CD4-positive, alpha-beta memory T cell (primary cell): ENCODE measurements at regions of chr21 and their contacts with region 1.

Region 1: GRCh38 chr21:14864211-14865021 is 200.4 kb downstream of the NRIP1 start:
- DNase-seq: peak in 2 of 5 donors; percentile 3 to 4
- H3K4me3 ChIP-seq: no peak overlapping the region
- H3K4me3 Mint-ChIP-seq: no peak overlapping the region
- H3K27ac ChIP-seq: no peak overlapping the region
- H3K27ac Mint-ChIP-seq: no peak overlapping the region
- H3K4me1 ChIP-seq: no peaks in the 10 kb centered on the region
- H3K4me1 Mint-ChIP-seq: peaks cover 0 to 1% (median 0%) of the 10 kb centered on the region in 4 donors
- H3K27me3 ChIP-seq: no peaks in the 10 kb centered on the region
- H3K27me3 Mint-ChIP-seq: no peaks in the 10 kb centered on the region

Region 2: GRCh38 chr21:14259747-14260146 is 604.7 kb before region 1 on chr21:
- CTCF ChIA-PET with region 1: no interaction called
- POLR2A ChIA-PET with region 1: no interaction called
- intact Hi-C with region 1: loop called (anchors 2 kb)
- DNase-seq: peak in 3 of 5 donors; percentile 6 to 24 (median 11)
- H3K4me3 ChIP-seq: no peak overlapping the region
- H3K4me3 Mint-ChIP-seq: no peak overlapping the region
- H3K27ac ChIP-seq: no peak overlapping the region
- H3K27ac Mint-ChIP-seq: no peak overlapping the region
- H3K4me1 ChIP-seq: no peaks in the 10 kb centered on the region
- H3K4me1 Mint-ChIP-seq: no peaks in the 10 kb centered on the region
- H3K27me3 ChIP-seq: no peaks in the 10 kb centered on the region
- H3K27me3 Mint-ChIP-seq: peaks cover 3 to 10% of the 10 kb centered on the region in 2 donors

Region 3: DNA sequence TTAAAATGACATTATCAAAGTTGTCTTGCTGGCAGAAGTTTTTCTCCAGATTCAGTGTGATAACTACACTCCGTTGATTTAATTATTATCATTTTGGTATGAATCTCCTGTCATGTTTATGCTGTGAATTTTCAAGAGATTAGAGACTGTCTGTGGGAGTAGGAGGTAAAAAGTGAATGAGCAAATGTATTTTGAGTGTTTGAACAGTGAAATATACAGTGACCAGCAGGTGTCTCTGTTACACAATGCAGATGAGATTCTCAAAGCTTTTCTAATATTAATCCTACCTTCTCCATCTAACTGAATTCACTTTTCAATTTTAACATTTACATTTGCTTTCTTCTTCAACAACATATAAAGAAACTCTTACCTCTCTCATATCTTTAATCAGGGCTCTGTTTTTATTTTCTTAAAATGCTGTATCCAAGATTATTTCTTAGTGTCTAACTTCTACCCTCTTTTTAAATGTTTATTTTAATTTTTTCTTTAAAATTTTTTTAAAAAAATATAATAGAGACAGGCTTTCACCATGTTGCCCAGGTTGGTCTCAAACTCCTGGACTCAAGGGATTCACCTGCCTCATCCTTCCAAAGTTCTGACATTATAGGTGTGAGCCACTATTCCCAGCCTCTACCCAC is 460.6 kb before region 1 on chr21:
- CTCF ChIA-PET with region 1: no interaction called
- POLR2A ChIA-PET with region 1: no interaction called
- intact Hi-C with region 1: loop called (anchors 1 kb)
- DNase-seq: peak in 4 of 5 donors; percentile 32 to 45 (median 38)
- H3K4me3 ChIP-seq: no peak overlapping the region
- H3K4me3 Mint-ChIP-seq: no peak overlapping the region
- H3K27ac ChIP-seq: no peak overlapping the region
- H3K27ac Mint-ChIP-seq: no peak overlapping the region
- H3K4me1 ChIP-seq: no peaks in the 10 kb centered on the region
- H3K4me1 Mint-ChIP-seq: peaks cover 0 to 1% (median 0%) of the 10 kb centered on the region in 4 donors
- H3K27me3 ChIP-seq: no peaks in the 10 kb centered on the region
- H3K27me3 Mint-ChIP-seq: peaks cover 0 to 3% of the 10 kb centered on the region in 2 donors

Region 4: DNA sequence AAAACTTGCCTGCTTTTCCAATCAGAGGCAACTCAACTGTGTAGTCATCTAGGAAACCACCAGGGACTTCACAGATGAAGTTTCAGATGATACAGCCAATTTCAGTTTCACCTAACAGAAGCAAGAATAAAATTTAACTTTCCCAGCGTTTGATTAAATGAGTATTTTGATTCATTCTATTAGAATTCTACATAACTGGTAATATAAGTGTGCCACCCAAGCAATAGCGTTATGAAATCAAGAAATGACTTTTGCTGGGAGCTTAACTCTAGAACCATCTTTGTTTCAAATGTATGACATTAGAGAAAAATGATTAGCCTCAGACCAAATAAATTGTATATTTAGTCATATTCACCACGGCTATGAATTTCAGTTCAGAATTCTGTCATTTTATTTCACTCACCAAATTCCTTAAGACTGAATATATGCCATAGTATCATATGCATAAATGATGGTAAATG is 38.9 kb before region 1 on chr21:
- CTCF ChIA-PET with region 1: no interaction called
- POLR2A ChIA-PET with region 1: no interaction called
- intact Hi-C with region 1: no loop called
- DNase-seq: no peak
- H3K4me3 ChIP-seq: no peak overlapping the region
- H3K4me3 Mint-ChIP-seq: no peak overlapping the region
- H3K27ac ChIP-seq: no peak overlapping the region
- H3K27ac Mint-ChIP-seq: no peak overlapping the region
- H3K4me1 ChIP-seq: no peaks in the 10 kb centered on the region
- H3K4me1 Mint-ChIP-seq: no peaks in the 10 kb centered on the region
- H3K27me3 ChIP-seq: no peaks in the 10 kb centered on the region
- H3K27me3 Mint-ChIP-seq: no peaks in the 10 kb centered on the region

Region 5: GRCh38 chr21:14842601-14843000 is 21.8 kb before region 1 on chr21:
- CTCF ChIA-PET with region 1: no interaction called
- POLR2A ChIA-PET with region 1: no interaction called
- intact Hi-C with region 1: no loop called
- DNase-seq: no peak
- H3K4me3 ChIP-seq: no peak overlapping the region
- H3K4me3 Mint-ChIP-seq: no peak overlapping the region
- H3K27ac ChIP-seq: no peak overlapping the region
- H3K27ac Mint-ChIP-seq: no peak overlapping the region
- H3K4me1 ChIP-seq: no peaks in the 10 kb centered on the region
- H3K4me1 Mint-ChIP-seq: no peaks in the 10 kb centered on the region
- H3K27me3 ChIP-seq: no peaks in the 10 kb centered on the region
- H3K27me3 Mint-ChIP-seq: no peaks in the 10 kb centered on the region